ENCODE measurements at regions of chrX and their contacts with region 1.

Region 1: DNA sequence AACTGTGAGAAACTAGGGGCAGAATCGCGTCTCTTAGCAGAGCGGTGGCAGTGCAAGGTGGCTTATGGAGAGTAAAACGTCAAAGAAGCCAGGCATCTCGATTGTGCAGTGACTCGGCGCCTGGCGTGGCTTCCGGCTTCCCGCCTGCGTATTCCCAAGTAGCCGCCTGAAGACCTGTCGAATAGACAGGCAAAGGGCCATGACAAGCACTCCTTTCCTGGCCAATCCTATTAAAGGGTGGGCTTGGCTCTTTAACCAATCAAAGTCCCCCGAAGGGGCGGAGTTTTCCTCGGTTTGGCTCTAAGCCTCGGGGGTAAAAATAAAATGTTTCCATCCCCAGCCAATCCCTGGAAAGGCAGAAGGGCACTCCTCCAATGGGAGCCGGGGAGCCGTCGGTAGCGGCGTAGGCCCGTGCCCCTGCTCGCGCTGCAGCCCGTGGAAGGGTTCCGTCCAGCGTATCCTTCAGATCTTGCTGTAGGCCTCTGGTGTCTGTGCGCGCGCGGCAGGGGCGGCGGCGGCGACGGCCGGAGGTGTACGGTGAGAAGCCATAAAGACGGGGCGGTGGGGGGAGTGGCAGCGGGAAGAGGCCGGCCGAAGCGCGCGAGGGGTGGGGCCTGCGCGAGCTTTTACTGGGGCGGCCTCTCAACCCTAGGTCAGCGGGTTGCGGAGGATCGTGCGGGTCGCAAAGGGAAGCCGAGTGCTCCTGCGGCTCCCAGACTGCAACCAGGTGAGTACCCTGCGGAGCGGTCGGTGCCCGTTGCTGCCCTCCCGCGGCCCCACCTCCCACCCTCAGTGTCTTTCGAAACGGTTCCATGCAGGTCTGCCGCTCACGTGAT is at the start of gene KANTR:
- DNase-seq: peak; percentile 94
- H3K4me3 Mint-ChIP-seq: peak within 1 kb of the TSS; percentile 88
- H3K27ac Mint-ChIP-seq: peak within 1 kb of the TSS; percentile 92
- H3K4me1 Mint-ChIP-seq: peaks cover 13% of the 10 kb centered on the region
- H3K27me3 Mint-ChIP-seq: no peaks in the 10 kb centered on the region
- total RNA-seq, gene KANTR: 7.8 and 10.0 TPM in 2 replicates

Region 2: DNA sequence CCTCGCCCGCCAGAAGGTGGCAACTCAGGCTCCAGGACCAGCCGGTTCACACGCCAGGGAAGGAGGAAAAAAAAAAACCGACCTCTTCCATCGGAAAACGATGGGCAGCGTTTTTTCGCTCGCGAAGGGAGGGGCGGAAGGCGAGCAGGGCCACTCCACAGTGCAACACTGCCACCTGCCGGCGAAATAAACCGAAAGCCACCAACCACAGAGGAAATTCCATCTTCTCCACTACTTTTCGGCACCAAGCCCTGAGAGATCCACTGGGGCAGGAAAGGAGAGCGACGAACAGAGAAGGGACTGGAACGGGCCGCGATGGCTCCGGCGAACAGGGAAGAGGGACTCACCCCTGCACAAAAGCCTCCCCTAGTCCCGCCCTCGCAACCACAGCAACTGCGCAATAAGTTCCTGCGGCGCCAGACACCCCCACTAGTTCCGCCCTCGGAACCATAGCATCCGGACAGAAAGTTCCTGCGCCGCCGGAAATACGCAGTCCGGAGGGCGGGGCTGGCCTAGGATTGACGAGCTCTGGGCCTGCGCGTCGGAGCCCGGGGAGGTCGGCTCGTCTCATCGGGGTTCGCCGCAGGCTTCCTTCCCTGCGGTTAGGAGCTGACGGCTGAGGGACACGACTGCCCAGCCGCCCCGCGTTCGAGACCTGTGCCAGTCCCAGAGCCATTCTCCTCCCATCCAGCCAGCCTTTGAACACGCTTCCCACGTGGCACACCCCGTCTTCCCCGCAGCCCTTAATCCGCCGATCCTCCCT is 159.1 kb before region 1 on chrX:
- intact Hi-C with region 1: no loop called
- DNase-seq: peak; percentile 96
- H3K4me3 Mint-ChIP-seq: peak overlapping the region; percentile 93
- H3K27ac Mint-ChIP-seq: peak overlapping the region; percentile 98
- H3K4me1 Mint-ChIP-seq: peaks cover 8% of the 10 kb centered on the region
- H3K27me3 Mint-ChIP-seq: peaks cover 3% of the 10 kb centered on the region

Region 3: GRCh38 chrX:53013291-53013690 is 80.7 kb before region 1 on chrX:
- intact Hi-C with region 1: no loop called
- DNase-seq: peak; percentile 27
- H3K4me3 Mint-ChIP-seq: no peak overlapping the region
- H3K27ac Mint-ChIP-seq: no peak overlapping the region
- H3K4me1 Mint-ChIP-seq: no peaks in the 10 kb centered on the region
- H3K27me3 Mint-ChIP-seq: peaks cover 6% of the 10 kb centered on the region

Region 4: DNA sequence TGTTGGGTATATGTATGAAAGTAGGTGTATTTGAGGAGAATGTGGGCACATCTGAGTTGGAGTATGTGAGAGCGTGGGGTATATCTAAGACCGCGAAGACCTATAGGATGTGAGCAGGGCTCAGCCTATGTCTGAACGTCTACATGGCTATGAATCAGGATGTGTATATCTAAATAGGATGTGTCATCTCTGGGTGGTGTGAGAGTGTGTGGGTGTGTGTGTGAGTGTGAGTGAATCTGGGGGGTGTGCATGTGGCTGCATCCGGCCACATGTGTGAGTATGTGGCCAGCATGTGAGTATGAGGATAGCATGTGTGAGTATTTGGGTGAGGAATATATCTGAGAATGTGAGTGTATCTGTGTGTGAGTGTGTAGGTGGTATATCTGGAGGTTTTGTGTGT is 37.7 kb before region 1 on chrX:
- intact Hi-C with region 1: no loop called
- DNase-seq: no peak
- H3K4me3 Mint-ChIP-seq: no peak overlapping the region
- H3K27ac Mint-ChIP-seq: no peak overlapping the region
- H3K4me1 Mint-ChIP-seq: peaks cover 2% of the 10 kb centered on the region
- H3K27me3 Mint-ChIP-seq: no peaks in the 10 kb centered on the region

Region 5: GRCh38 chrX:53071604-53072417 is 22.2 kb before region 1 on chrX:
- intact Hi-C with region 1: loop called (anchors 1 kb)
- DNase-seq: peak; percentile 89
- H3K4me3 Mint-ChIP-seq: peak overlapping the region; percentile 83
- H3K27ac Mint-ChIP-seq: peak overlapping the region; percentile 70
- H3K4me1 Mint-ChIP-seq: peaks cover 18% of the 10 kb centered on the region
- H3K27me3 Mint-ChIP-seq: peaks cover 3% of the 10 kb centered on the region

Region 6: DNA sequence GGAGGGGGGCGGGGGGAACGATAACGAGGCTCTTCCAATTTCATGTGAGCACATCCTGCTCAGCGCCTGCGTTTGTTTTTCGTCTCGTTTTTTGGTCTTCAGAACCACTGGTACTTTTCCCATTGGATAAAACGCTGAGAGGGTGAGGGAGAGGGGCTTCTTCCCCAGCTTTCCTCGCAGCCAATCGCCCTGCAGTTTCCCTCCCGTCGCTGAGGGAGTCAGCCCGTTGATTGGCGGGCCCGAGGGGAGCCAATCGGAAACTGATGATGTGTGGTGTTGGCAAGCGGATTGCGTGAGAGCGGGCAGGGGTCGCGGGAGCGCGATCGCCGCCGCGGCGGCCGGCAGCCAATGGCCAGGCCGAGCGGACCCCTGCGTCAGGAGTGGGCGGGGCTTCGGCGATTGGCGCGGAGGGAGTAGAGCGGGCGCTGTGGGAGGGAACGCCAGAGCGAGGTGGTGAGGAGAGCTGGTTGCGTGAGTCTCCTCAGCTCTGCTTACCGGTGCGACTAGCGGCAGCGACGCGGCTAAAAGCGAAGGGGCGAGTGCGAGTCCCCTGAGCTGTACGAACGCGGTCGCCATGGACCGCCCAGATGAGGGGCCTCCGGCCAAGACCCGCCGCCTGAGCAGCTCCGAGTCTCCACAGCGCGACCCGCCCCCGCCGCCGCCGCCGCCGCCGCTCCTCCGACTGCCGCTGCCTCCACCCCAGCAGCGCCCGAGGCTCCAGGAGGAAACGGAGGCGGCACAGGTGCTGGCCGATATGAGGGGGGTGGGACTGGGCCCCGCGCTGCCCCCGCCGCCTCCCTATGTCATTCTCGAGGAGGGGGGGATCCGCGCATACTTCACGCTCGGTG is 11.8 kb before region 1 on chrX and contains the start of gene TSPYL2:
- intact Hi-C with region 1: loop called (anchors 1 kb)
- DNase-seq: peak; percentile 97
- H3K4me3 Mint-ChIP-seq: peak within 1 kb of the TSS; percentile 96
- H3K27ac Mint-ChIP-seq: peak within 1 kb of the TSS; percentile 98
- H3K4me1 Mint-ChIP-seq: peaks cover 31% of the 10 kb centered on the region
- H3K27me3 Mint-ChIP-seq: no peaks in the 10 kb centered on the region
- total RNA-seq, gene TSPYL2: 37.3 and 40.3 TPM in 2 replicates

Region 7: DNA sequence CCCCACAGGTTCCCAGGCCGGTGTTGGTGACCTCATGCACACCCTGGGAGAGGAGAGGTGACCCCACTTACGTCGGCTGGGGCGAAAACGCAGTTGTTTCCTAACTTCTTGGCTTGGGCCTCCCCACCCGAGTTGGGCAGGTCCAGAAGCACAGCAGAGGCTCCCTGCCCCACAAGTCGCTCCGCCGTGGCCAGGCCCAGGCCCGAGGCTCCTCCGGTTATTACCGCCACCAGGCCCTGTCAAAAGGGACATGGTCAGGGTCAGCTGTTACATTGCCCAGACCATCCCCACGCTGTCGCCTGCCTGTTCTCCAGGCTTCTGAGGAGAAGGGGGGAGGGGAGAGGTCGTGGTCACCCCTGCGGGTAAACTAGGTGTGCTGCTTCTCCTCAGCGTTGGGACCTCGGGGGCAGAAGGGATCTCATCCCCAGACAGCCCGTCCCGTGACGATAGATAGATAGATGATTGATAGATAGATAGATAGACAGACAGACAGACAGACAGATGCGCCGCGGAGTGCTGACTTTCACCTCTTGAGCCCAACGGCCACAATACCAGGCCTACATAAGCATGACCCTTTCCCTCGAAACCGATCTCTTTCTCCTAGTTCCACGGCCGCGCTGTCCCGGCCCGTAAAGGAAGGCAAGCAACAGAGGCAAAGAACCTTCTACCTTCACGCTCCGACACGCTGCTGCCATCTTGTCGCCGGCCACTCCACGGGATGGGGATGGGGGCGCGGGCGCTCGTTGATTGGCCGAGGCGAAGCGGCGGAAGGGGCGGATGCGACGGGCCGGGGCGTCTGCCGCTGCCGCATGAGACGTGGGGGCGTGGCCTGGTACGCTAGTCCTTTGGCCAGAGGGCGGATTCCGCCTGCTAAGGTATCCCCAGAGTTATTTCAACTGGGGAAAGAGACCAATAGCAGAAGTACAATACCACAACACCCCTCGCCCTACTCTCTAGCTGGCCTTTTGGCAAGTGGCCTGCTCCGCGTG is 340.0 kb after region 1 on chrX and contains the start of gene HSD17B10:
- intact Hi-C with region 1: loop called (anchors 10 kb)
- DNase-seq: peak; percentile 96
- H3K4me3 Mint-ChIP-seq: peak within 1 kb of the TSS; percentile 98
- H3K27ac Mint-ChIP-seq: peak within 1 kb of the TSS; percentile 93
- H3K4me1 Mint-ChIP-seq: peaks cover 22% of the 10 kb centered on the region
- H3K27me3 Mint-ChIP-seq: no peaks in the 10 kb centered on the region
- total RNA-seq, gene HSD17B10: 148 and 165 TPM in 2 replicates

Measured in activated CD4-positive, alpha-beta T cell treated with anti-CD3 and anti-CD28 coated beads, Interleukin-2, amount 10 ng/mL, durations not matched to agents 24 days and 14 days (primary cell).